Activated naive CD4-positive, alpha-beta T cell treated with anti-CD3 and anti-CD28 coated beads, Interleukin-2, amount 10 ng/mL, durations not matched to agents 7 days and 5 days (primary cell): ENCODE measurements at regions of chr14 and their contacts with region 1.

Region 1: DNA sequence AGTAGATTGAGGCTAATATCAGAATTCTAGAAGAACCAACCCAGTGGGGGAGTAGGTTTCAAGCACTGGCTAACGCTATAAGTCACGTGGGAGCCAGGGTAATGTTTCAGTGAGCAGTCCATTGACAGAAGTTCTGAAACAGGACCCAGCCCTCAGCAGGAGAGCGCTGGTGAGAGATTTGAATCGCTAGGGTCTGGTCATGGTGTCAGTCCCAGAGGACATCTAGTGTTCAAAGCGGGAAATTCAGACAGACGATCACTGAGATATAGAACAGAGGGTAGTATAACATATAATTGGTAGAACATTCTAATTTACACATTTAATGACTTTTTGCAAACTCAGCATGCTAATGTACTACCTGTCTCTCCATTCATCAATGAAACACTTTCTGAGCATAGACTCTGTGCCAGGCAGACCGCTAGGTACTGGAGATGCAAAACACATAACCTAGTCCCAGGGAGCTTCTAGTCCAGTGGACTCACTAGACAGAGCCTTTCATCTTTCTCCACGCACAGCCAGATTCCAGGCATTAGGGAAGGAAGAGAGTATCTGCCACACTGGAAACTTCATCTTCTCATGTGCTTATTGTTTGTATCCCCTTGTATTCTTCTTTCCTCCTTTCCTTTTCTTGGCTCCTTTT is 35.4 kb upstream of the RNASE3 start:
- DNase-seq: peak; percentile 68
- H3K4me3 Mint-ChIP-seq: no peak overlapping the region
- H3K27ac Mint-ChIP-seq: no peak overlapping the region
- H3K4me1 Mint-ChIP-seq: peaks cover 3% of the 10 kb centered on the region
- H3K27me3 Mint-ChIP-seq: peaks cover 28% of the 10 kb centered on the region

Region 2: GRCh38 chr14:20690848-20691523 is 164.8 kb before region 1 on chr14:
- CTCF ChIA-PET with region 1: interaction called, 38 read pairs
- DNase-seq: peak; percentile 54
- H3K4me3 Mint-ChIP-seq: no peak overlapping the region
- H3K27ac Mint-ChIP-seq: no peak overlapping the region
- H3K4me1 Mint-ChIP-seq: peaks cover 7% of the 10 kb centered on the region
- H3K27me3 Mint-ChIP-seq: peaks cover 3% of the 10 kb centered on the region

Region 3: GRCh38 chr14:20697273-20698017 is 158.3 kb before region 1 on chr14:
- CTCF ChIA-PET with region 1: interaction called, 38 read pairs
- DNase-seq: peak; percentile 78
- H3K4me3 Mint-ChIP-seq: no peak overlapping the region
- H3K27ac Mint-ChIP-seq: no peak overlapping the region
- H3K4me1 Mint-ChIP-seq: no peaks in the 10 kb centered on the region
- H3K27me3 Mint-ChIP-seq: peaks cover 12% of the 10 kb centered on the region

Region 4: DNA sequence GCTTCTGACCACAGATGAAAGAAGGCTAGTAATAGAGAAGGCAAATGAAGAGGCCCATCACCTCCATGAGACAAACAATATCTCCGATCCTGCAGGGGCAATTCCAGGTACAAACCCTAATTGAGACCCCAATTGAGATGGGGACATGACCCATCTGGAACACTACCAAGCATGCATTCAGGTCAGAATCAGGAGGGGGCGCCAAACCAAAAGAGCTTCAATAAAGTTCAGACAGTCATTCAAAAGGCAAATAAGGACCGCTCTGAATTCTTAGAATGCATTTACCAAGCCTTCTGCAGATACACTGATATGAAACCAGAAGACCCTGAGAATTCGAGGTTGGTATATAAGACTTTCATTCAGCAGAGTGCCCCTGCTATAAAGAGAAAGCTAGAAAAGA is 97.8 kb before region 1 on chr14:
- CTCF ChIA-PET with region 1: interaction called, 23 read pairs
- DNase-seq: peak; percentile 62
- H3K4me3 Mint-ChIP-seq: no peak overlapping the region
- H3K27ac Mint-ChIP-seq: no peak overlapping the region
- H3K4me1 Mint-ChIP-seq: no peaks in the 10 kb centered on the region
- H3K27me3 Mint-ChIP-seq: peaks cover 6% of the 10 kb centered on the region

Region 5: GRCh38 chr14:20866963-20867362 is 11.2 kb after region 1 on chr14:
- CTCF ChIA-PET with region 1: interaction called, 29 read pairs
- DNase-seq: no peak
- H3K4me3 Mint-ChIP-seq: no peak overlapping the region
- H3K27ac Mint-ChIP-seq: no peak overlapping the region
- H3K4me1 Mint-ChIP-seq: no peaks in the 10 kb centered on the region
- H3K27me3 Mint-ChIP-seq: peaks cover 23% of the 10 kb centered on the region

Region 6: DNA sequence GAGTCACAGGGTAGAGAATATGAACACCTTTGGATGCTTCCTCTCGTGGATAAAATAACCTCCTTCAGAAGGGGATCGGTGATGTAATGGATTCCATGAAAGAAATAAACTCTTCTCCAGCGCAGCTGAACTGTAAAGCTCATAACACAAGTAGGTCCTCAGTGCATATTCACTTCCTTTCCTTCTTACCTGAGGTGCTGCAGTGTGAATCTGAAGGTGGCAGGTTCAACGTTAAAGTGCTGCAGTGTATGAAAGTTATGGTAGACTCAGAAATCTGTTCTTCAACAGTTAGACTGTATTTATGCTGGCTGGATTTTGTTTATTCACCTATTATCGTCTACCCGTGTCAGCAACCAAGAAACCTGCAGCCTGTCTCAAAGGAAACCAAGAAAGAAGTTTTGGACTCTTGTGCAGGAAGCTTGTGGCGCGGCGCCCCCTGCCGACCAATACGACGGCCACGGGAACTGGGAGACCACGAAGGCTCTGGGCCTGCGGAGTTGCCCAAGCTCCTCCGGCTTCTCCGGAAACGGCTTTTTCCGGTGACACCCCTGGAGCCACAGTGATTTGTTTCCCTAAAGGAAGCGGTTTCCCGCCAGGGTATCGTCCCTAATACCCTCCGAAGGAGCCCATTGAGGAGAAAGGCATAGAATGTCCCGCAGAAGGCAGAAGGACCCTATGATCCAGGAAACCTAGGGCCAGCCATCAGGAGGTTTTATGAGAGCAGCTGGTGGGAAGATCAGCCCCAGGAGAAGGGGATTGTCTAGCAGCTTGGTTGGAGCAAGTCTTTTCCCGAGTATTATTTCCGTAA is 17.8 kb after region 1 on chr14:
- CTCF ChIA-PET with region 1: interaction called, 29 read pairs
- DNase-seq: peak; percentile 86
- H3K4me3 Mint-ChIP-seq: no peak overlapping the region
- H3K27ac Mint-ChIP-seq: no peak overlapping the region
- H3K4me1 Mint-ChIP-seq: peaks cover 16% of the 10 kb centered on the region
- H3K27me3 Mint-ChIP-seq: peaks cover 42% of the 10 kb centered on the region